MCF 10A (cell line): ENCODE measurements at regions of chr5 and their contacts with region 1.

Region 1: GRCh38 chr5:140372971-140373487 is 13.0 kb downstream of the SLC4A9 start:
- DNase-seq: peak; percentile 90
- H3K4me3 Mint-ChIP-seq: no peak overlapping the region
- H3K27ac Mint-ChIP-seq: no peak overlapping the region
- H3K4me1 Mint-ChIP-seq: peaks cover 8% of the 10 kb centered on the region
- H3K27me3 Mint-ChIP-seq: no peaks in the 10 kb centered on the region
- CTCF ChIP-seq: peak; percentile 97

Region 2: GRCh38 chr5:140357726-140358093 is 15.3 kb before region 1 on chr5:
- CTCF ChIA-PET with region 1: interaction called, 66 read pairs
- POLR2A ChIA-PET with region 1: interaction called, 4 read pairs
- intact Hi-C with region 1: no loop called
- DNase-seq: peak; percentile 91
- H3K4me3 Mint-ChIP-seq: peak overlapping the region; percentile 33
- H3K27ac Mint-ChIP-seq: no peak overlapping the region
- H3K4me1 Mint-ChIP-seq: peaks cover 8% of the 10 kb centered on the region
- H3K27me3 Mint-ChIP-seq: no peaks in the 10 kb centered on the region
- CTCF ChIP-seq: peak; percentile 97

Region 3: GRCh38 chr5:140391312-140391711 is 18.3 kb after region 1 on chr5:
- CTCF ChIA-PET with region 1: interaction called, 37 read pairs
- POLR2A ChIA-PET with region 1: interaction called, 4 read pairs
- intact Hi-C with region 1: no loop called
- DNase-seq: peak; percentile 76
- H3K4me3 Mint-ChIP-seq: no peak overlapping the region
- H3K27ac Mint-ChIP-seq: peak overlapping the region; percentile 35
- H3K4me1 Mint-ChIP-seq: peaks cover 5% of the 10 kb centered on the region
- H3K27me3 Mint-ChIP-seq: no peaks in the 10 kb centered on the region
- CTCF ChIP-seq: no peak

Region 4: GRCh38 chr5:140401362-140402257 is 28.6 kb after region 1 on chr5 and contains the start of gene ANKHD1:
- CTCF ChIA-PET with region 1: interaction called, 17 read pairs
- POLR2A ChIA-PET with region 1: interaction called, 30 read pairs
- intact Hi-C with region 1: no loop called
- DNase-seq: peak; percentile 100
- H3K4me3 Mint-ChIP-seq: no peak within 1 kb of the TSS
- H3K27ac Mint-ChIP-seq: no peak within 1 kb of the TSS
- H3K4me1 Mint-ChIP-seq: peaks cover 19% of the 10 kb centered on the region
- H3K27me3 Mint-ChIP-seq: no peaks in the 10 kb centered on the region
- CTCF ChIP-seq: no peak
- total RNA-seq, gene ANKHD1: 142 and 146 TPM in 2 replicates

Region 5: GRCh38 chr5:140547508-140548299 is 174.7 kb after region 1 on chr5 and contains the start of gene EIF4EBP3:
- CTCF ChIA-PET with region 1: interaction called, 19 read pairs
- POLR2A ChIA-PET with region 1: interaction called, 5 read pairs
- intact Hi-C with region 1: no loop called
- DNase-seq: peak; percentile 97
- H3K4me3 Mint-ChIP-seq: peak within 1 kb of the TSS; percentile 77
- H3K27ac Mint-ChIP-seq: peak within 1 kb of the TSS; percentile 80
- H3K4me1 Mint-ChIP-seq: peaks cover 27% of the 10 kb centered on the region
- H3K27me3 Mint-ChIP-seq: no peaks in the 10 kb centered on the region
- CTCF ChIP-seq: peak; percentile 74
- total RNA-seq, gene EIF4EBP3: 25.3 and 35.3 TPM in 2 replicates

Region 6: DNA sequence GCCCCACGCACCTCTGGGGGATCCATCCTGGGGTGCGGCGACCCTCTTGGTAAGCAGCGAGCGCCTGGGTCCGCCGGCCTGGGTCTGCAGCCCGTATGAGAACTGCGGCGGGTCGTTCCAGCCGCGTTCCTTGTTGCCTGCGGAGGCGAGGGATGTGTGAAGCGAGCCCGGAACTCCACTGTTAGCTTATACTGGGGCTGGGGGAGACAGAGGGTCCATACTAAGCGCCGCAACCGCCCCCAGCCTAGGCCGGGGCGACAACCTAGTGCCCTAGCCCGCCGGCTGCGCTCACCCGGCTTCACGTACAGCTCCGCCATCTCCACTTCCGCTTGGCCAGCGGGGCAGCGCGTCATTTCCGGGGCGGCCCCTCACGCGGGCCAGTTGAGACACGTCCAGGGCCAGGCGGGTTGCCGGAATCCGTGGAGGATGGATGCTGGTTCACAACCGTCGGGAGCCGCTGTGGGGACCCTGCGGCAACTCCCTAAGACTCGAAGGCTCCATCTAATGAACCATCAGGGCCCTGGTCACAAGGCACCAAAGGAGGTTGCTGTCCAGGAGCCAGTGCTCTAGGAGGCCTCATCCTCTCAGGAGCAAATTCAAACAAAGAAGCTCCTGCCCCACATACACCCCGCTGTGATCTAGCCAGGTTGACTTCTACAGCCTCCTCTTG is 184.2 kb after region 1 on chr5 and contains the start of gene SRA1:
- CTCF ChIA-PET with region 1: interaction called, 5 read pairs
- POLR2A ChIA-PET with region 1: interaction called, 4 read pairs
- intact Hi-C with region 1: loop called (anchors 1 kb)
- DNase-seq: peak; percentile 96
- H3K4me3 Mint-ChIP-seq: peak within 1 kb of the TSS; percentile 87
- H3K27ac Mint-ChIP-seq: peak within 1 kb of the TSS; percentile 91
- H3K4me1 Mint-ChIP-seq: peaks cover 38% of the 10 kb centered on the region
- H3K27me3 Mint-ChIP-seq: no peaks in the 10 kb centered on the region
- CTCF ChIP-seq: no peak
- total RNA-seq, gene SRA1: 105 and 107 TPM in 2 replicates

Region 7: GRCh38 chr5:140639148-140639979 is 266.3 kb after region 1 on chr5 and contains the start of gene TMCO6:
- CTCF ChIA-PET with region 1: interaction called, 3 read pairs
- POLR2A ChIA-PET with region 1: no interaction called
- intact Hi-C with region 1: loop called (anchors 2 kb)
- DNase-seq: peak; percentile 99
- H3K4me3 Mint-ChIP-seq: peak within 1 kb of the TSS; percentile 83
- H3K27ac Mint-ChIP-seq: peak within 1 kb of the TSS; percentile 92
- H3K4me1 Mint-ChIP-seq: peaks cover 36% of the 10 kb centered on the region
- H3K27me3 Mint-ChIP-seq: no peaks in the 10 kb centered on the region
- CTCF ChIP-seq: peak; percentile 78
- total RNA-seq, gene TMCO6: 15.7 and 17.2 TPM in 2 replicates